ENCODE measurements at regions of chr5 and their contacts with region 1.

Region 1: DNA sequence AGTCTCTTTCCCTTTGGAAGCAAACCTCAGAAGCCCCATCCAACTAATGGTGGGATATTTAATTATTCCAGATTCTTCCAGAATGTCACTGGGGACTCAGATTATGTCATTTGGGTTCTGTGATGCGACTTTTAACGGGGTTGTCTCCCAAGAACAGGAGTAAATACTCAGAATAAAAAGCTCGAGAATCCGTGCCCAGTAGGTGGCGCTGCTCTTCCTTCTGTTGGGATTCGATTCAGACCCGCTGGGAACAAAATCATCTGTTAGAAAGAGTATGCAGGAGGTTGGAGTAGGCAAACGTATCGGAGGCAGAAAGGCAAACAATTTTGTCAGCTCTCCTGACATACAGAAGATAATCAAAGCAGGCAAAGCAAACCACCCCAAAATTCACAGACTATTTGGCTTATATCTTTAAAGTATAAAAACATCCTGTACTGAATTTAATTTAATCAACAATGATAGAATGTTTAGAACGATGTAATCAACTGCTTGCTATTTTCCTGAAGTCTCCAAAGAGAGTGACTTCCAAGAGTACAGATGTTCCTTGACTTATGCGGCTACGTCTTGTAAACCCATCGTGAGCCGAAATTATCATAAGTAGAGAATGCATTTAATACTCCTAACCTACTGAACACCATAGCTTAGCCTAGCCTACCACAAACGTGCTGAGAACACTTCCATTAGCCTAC is 169.8 kb upstream of the RAI14 start:
- DNase-seq: peak; percentile 87
- ATAC-seq: peak; percentile 81 to 83
- H3K4me3 ChIP-seq: no peak overlapping the region
- H3K27ac ChIP-seq: peak overlapping the region; percentile 70
- H3K4me1 ChIP-seq: peaks cover 22% of the 10 kb centered on the region
- H3K27me3 ChIP-seq: no peaks in the 10 kb centered on the region
- CTCF ChIP-seq: peak; percentile 82

Region 2: DNA sequence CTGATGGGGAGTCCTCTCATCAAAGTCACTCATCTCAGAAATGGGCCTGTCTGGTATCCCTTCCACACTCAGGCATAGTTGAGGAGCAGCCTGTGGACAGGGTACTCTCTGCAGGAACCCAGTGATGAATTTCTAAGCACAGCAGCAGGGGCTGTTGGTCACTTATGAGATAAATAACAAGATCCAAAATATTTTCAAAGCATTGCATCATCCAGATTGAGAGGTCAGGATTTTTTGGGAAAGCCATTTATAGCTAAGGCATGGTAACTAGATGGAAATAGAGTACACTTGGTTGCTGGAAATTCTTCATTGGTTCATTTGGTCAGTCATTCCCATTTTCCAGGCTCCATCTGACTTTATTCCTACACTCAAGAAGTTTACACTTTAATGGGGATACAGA is 76.9 kb before region 1 on chr5:
- intact Hi-C with region 1: no loop called
- DNase-seq: no peak
- ATAC-seq: no peak
- H3K4me3 ChIP-seq: no peak overlapping the region
- H3K27ac ChIP-seq: no peak overlapping the region
- H3K4me1 ChIP-seq: no peaks in the 10 kb centered on the region
- H3K27me3 ChIP-seq: no peaks in the 10 kb centered on the region
- CTCF ChIP-seq: no peak

Region 3: GRCh38 chr5:34533582-34534522 is 47.5 kb after region 1 on chr5:
- intact Hi-C with region 1: loop called (anchors 10 kb)
- DNase-seq: no peak
- ATAC-seq: peak; percentile 73 to 76
- H3K4me3 ChIP-seq: no peak overlapping the region
- H3K27ac ChIP-seq: peak overlapping the region; percentile 33
- H3K4me1 ChIP-seq: peaks cover 39% of the 10 kb centered on the region
- H3K27me3 ChIP-seq: no peaks in the 10 kb centered on the region
- CTCF ChIP-seq: no peak

Region 4: GRCh38 chr5:34699155-34700077 is 213.1 kb after region 1 on chr5:
- intact Hi-C with region 1: no loop called
- DNase-seq: no peak
- ATAC-seq: peak; percentile 85 to 92
- H3K4me3 ChIP-seq: no peak overlapping the region
- H3K27ac ChIP-seq: peak overlapping the region; percentile 53
- H3K4me1 ChIP-seq: peaks cover 21% of the 10 kb centered on the region
- H3K27me3 ChIP-seq: no peaks in the 10 kb centered on the region
- CTCF ChIP-seq: no peak

Region 5: GRCh38 chr5:35575578-35575977 is 1089.3 kb after region 1 on chr5:
- intact Hi-C with region 1: no loop called
- DNase-seq: no peak
- ATAC-seq: no peak
- H3K4me3 ChIP-seq: no peak overlapping the region
- H3K27ac ChIP-seq: no peak overlapping the region
- H3K4me1 ChIP-seq: no peaks in the 10 kb centered on the region
- H3K27me3 ChIP-seq: no peaks in the 10 kb centered on the region
- CTCF ChIP-seq: no peak

Measured in lower lobe of right lung (tissue), 2 donors.